Activated T-helper 1 cell treated with anti-CD3 and anti-CD28 coated beads, Interleukin-12 subunit alpha, Interleukin-12 subunit beta, Interleukin-2, Interleukin-4 antibody, amounts not matched to agents 30 ng/mL and 10 ng/mL and 1 ng/mL, durations not matched to agents 14 hours and 24 hours and 36 hours (primary cell): ENCODE measurements at regions of chr1 and their contacts with region 1.

Region 1: DNA sequence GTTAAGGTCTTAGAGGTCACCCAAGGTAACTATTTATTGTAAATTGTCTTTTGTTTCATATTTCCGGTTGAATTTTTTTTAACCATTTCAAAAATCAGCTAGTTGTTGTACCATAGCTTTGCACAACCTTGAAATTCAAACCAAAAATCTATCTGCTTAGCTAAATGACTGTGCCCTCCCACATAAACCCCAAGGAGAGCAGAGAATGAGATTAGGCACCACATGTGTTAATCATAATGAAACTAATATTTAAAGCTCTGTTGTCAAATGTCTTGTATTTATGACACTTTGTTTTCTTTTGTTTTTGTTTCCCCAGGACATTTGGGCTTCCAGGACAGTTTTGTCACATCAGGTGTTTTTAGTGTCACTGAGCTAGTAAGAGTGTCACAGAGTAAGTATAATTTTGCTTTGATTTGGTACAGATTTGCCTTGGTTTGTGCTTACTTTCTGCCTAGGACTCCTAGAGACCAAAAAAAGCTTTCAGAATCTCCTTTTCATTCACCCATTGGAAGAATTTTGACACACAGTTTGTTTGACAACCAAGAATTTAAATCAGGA is 249.9 kb downstream of the NFIA start:
- DNase-seq: peak; percentile 14
- H3K4me3 Mint-ChIP-seq: peak overlapping the region; percentile 4
- H3K27ac Mint-ChIP-seq: peak overlapping the region; percentile 77
- H3K4me1 Mint-ChIP-seq: peaks cover 29% of the 10 kb centered on the region
- H3K27me3 Mint-ChIP-seq: peaks cover 23% of the 10 kb centered on the region

Region 2: DNA sequence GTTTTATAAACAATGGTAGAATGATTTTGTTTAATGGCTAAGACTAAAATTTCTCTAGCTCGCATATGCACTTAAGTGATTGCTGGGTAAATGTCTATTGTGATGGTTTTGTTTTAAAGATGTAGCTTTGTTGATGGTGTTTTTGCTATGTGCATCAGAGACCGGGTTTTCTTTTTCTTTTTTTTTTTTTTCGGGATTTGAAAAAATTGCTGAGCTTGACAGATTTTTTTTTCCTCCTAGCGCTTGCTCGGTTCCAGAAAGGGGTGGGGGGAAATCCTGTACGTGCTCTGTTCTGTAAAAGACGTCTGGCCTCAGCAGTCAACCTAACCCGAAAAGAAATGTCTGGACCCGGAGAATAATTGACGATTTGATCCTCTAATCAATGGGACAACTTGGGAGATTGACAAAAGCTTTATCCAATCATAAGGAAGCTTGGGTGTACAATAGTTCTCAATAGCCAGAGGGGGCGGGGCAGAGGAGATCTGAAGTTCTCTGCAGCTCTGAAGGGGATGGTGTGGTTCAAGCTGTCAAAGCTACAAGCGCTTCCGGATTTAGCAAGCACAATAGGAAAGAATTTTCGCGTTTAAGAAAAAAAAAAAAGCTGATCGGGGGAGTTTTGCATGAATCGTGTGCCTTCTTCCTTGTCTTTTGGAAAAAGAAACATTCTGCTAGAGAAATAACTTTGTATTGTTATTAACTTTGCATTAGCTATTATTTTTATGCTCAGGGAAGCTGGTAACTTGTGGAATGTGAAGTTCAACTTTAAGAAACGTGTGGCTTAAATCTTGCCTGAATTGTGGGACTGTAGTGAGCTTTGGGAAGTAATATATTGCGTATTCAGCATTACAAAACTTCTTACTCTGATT is 254.4 kb before region 1 on chr1:
- intact Hi-C with region 1: loop called (anchors 2 kb)
- DNase-seq: peak; percentile 80
- H3K4me3 Mint-ChIP-seq: peak overlapping the region; percentile 92
- H3K27ac Mint-ChIP-seq: peak overlapping the region; percentile 16
- H3K4me1 Mint-ChIP-seq: peaks cover 43% of the 10 kb centered on the region
- H3K27me3 Mint-ChIP-seq: peaks cover 50% of the 10 kb centered on the region

Region 3: GRCh38 chr1:61157468-61157987 is 174.7 kb before region 1 on chr1:
- intact Hi-C with region 1: loop called (anchors 1 kb)
- DNase-seq: no peak
- H3K4me3 Mint-ChIP-seq: no peak overlapping the region
- H3K27ac Mint-ChIP-seq: no peak overlapping the region
- H3K4me1 Mint-ChIP-seq: peaks cover 11% of the 10 kb centered on the region
- H3K27me3 Mint-ChIP-seq: peaks cover 28% of the 10 kb centered on the region

Region 4: GRCh38 chr1:61270761-61271411 is 61.4 kb before region 1 on chr1:
- intact Hi-C with region 1: loop called (anchors 1 kb)
- DNase-seq: no peak
- H3K4me3 Mint-ChIP-seq: no peak overlapping the region
- H3K27ac Mint-ChIP-seq: peak overlapping the region; percentile 32
- H3K4me1 Mint-ChIP-seq: peaks cover 17% of the 10 kb centered on the region
- H3K27me3 Mint-ChIP-seq: peaks cover 10% of the 10 kb centered on the region

Region 5: GRCh38 chr1:61301824-61302657 is 30.2 kb before region 1 on chr1:
- intact Hi-C with region 1: loop called (anchors 1 kb)
- DNase-seq: peak; percentile 16
- H3K4me3 Mint-ChIP-seq: peak overlapping the region; percentile 3
- H3K27ac Mint-ChIP-seq: peak overlapping the region; percentile 84
- H3K4me1 Mint-ChIP-seq: peaks cover 34% of the 10 kb centered on the region
- H3K27me3 Mint-ChIP-seq: peaks cover 2% of the 10 kb centered on the region